K562 (cell line): ENCODE measurements at regions of chr17 and their contacts with region 1.

Region 1: DNA sequence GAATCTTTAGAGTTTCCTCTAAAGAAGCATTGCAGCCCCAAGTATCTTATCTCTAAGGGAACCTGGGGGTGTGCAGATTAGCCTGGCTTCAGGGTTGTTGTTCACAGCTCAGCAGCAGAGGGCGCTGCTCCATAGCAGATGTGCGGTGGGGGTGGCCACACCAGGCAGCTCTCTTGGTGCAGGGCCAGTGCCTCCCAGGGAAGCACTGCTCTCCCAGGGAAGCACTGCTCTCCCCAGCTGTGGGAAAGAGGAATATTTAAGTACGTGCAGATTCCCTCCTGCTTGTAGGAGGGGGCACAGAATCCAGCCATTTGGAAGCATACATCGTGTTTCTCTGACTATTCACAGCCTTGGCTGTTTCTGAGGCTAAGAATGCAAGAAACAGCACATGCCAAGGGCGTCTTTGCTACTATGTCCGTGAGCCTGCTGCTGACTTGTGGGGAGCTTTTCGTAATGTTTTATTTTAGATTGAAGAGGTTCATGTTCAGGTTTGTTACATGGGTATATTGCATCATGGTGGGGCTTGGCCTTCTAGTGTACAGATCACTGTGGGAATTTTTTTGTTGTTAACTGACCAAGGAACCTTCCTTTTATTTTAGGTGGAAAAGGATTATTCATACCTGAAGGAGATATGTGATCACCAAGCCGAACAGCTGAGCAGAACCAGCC is 217.8 kb downstream of the SPECC1 start:
- DNase-seq: peak; percentile 79 to 83 (median 80)
- ATAC-seq: peak; percentile 99
- H3K4me3 ChIP-seq: no peak overlapping the region
- H3K27ac ChIP-seq: no peak overlapping the region
- H3K4me1 ChIP-seq: peaks cover 0 to 6% of the 10 kb centered on the region in 2 experiments; a peak in 3 of 5 replicates
- H3K27me3 ChIP-seq: no peaks in the 10 kb centered on the region
- CTCF ChIP-seq: peak; percentile 83 to 90 (median 86)
- EP300 ChIP-seq: no peak
- POLR2A ChIP-seq: no peak
- RAD21 ChIP-seq: peak; percentile 75 to 90

Region 2: GRCh38 chr17:19992803-19993713 is 233.9 kb before region 1 on chr17:
- CTCF ChIA-PET with region 1: no interaction called
- POLR2A ChIA-PET with region 1: no interaction called
- in situ Hi-C with region 1: no loop called
- intact Hi-C with region 1: loop called (anchors 2 kb)
- DNase-seq: peak; percentile 53 to 87 (median 56)
- ATAC-seq: peak; percentile 97
- H3K4me3 ChIP-seq: no peak overlapping the region
- H3K27ac ChIP-seq: no peak overlapping the region
- H3K4me1 ChIP-seq: peaks cover 6 to 8% of the 10 kb centered on the region in 2 experiments; a peak in 3 of 5 replicates
- H3K27me3 ChIP-seq: no peaks in the 10 kb centered on the region
- CTCF ChIP-seq: peak; percentile 67 to 97 (median 93)
- EP300 ChIP-seq: no peak
- POLR2A ChIP-seq: no peak
- RAD21 ChIP-seq: peak; percentile 60 to 88

Region 3: DNA sequence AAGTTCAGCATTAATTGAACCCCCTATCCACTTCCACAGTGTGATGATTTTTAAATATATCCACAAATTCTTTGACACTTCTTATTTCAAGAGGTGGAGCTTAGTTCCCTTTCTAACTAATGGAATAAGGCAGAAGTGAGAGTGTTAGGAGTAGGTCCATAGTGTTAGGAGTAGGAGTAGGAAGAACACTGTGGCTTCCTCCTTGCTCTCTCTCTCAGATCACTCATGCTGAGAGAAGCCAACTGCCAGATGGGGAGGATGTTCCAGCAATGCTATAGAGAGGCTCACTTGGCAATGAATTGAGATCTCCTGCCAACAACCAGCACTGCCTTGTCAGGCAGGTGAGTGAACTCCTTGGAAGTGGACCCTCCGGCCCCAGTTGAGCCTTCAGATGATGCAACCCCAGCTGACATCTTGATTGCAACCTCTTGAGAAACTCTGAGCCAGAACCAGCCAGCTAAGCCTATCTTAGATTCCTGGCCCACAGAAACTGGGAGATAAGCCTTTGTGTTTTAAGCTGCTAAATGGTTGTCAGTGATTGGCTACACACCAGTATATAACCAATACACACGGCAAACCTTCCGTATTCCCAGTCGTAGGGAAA is 173.5 kb before region 1 on chr17:
- CTCF ChIA-PET with region 1: no interaction called
- POLR2A ChIA-PET with region 1: no interaction called
- in situ Hi-C with region 1: no loop called
- intact Hi-C with region 1: no loop called
- DNase-seq: peak in 1 of 4 experiments; percentile 4
- ATAC-seq: no peak
- H3K4me3 ChIP-seq: no peak overlapping the region
- H3K27ac ChIP-seq: no peak overlapping the region
- H3K4me1 ChIP-seq: no peaks in the 10 kb centered on the region
- H3K27me3 ChIP-seq: no peaks in the 10 kb centered on the region
- CTCF ChIP-seq: no peak
- EP300 ChIP-seq: no peak
- POLR2A ChIP-seq: no peak
- RAD21 ChIP-seq: no peak